Dendritic cell treated with granulocyte-macrophage colony-stimulating factor and Interleukin-4, amounts not matched to agents 40 ng/mL and 50 ng/mL, for 4 days (primary cell): ENCODE measurements at regions of chr20 and their contacts with region 1.

Region 1: GRCh38 chr20:9609887-9610502 is 95.6 kb downstream of the LAMP5 start:
- H3K4me3 Mint-ChIP-seq: no peak overlapping the region
- H3K27ac Mint-ChIP-seq: no peak overlapping the region
- H3K4me1 Mint-ChIP-seq: no peaks in the 10 kb centered on the region
- H3K27me3 Mint-ChIP-seq: peaks cover 51% of the 10 kb centered on the region

Region 2: GRCh38 chr20:9407805-9408421 is 202.1 kb before region 1 on chr20:
- intact Hi-C with region 1: loop called (anchors 1 kb)
- H3K4me3 Mint-ChIP-seq: no peak overlapping the region
- H3K27ac Mint-ChIP-seq: no peak overlapping the region
- H3K4me1 Mint-ChIP-seq: no peaks in the 10 kb centered on the region
- H3K27me3 Mint-ChIP-seq: no peaks in the 10 kb centered on the region